CD8-positive, alpha-beta T cell (primary cell): ENCODE measurements at regions of chr10 and their contacts with region 1.

Region 1: DNA sequence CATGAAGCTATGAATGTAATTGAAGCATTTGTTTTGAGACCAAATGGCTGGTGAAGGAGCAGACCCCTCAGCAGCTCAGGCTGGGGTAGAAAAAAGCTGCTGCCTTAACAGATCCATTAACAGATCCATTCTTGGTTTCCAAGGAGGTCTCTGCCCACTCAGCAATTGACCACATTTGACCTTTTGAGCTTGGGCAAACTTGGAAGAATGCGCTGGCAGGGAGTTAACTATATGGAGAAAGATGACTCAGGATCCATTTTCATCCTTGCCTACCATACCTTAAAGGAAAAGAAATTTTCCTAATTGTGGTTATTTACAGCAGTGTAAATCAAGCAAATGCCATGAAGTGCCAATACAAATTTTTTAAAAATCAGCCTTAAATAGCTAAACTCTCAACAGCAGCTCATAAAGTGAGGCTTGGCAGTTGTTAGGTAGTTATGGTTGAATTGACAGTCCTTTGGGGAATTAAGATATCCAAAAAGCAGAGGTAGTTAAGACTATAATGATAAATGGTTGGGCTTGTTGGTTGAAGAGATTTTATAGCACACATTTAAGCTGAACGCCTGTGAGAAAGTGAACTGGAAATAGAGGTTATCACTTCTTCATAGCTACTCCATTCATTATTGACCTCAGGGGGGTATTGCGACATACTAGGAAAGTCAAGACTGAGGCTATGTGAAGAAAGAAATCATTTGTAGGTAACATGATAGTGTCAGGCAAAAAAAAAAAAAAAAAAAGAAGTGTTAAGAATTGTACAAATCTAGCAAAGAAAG is 83.9 kb downstream of the MKX start:
- DNase-seq: no peak
- ATAC-seq: no peak
- H3K4me3 ChIP-seq: no peak overlapping the region
- H3K4me3 Mint-ChIP-seq: no peak overlapping the region
- H3K27ac ChIP-seq: no peak overlapping the region
- H3K27ac Mint-ChIP-seq: no peak overlapping the region
- H3K4me1 ChIP-seq: no peaks in the 10 kb centered on the region
- H3K4me1 Mint-ChIP-seq: no peaks in the 10 kb centered on the region
- H3K27me3 ChIP-seq: peaks cover 0 to 5% of the 10 kb centered on the region in 2 experiments
- H3K27me3 Mint-ChIP-seq: peaks cover 43% of the 10 kb centered on the region
- CTCF ChIP-seq: no peak

Region 2: DNA sequence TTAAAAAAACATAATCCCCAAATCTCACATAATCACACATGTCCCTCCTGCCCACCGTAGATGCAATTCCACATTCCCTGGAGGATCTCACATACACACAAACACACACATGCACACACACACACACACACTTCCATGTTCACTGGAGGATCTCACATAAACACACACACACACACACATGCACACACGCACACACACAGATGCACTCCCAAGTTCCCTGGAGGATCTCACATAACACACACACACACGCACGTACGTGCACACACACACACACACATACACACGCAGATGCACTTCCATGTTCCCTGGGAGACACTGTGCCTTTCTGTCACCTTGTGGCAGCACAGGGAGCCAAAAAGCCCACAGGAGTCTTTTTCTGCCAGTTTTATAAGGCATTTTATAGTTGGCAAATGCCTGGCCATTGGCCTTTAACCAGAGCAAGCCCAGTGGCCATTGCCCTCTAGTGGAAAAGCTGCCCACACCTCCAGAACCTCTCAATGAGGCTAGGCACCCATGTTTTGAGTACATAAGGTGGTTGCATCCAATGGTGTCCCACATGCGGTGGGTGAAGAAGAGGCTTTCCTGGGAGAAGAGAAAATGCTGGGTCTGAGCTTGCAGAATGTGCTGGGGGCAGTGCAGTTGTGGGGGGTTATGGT is 305.7 kb before region 1 on chr10:
- CTCF ChIA-PET with region 1: no interaction called
- POLR2A ChIA-PET with region 1: no interaction called
- intact Hi-C with region 1: no loop called
- DNase-seq: no peak
- ATAC-seq: no peak
- H3K4me3 ChIP-seq: no peak overlapping the region
- H3K4me3 Mint-ChIP-seq: no peak overlapping the region
- H3K27ac ChIP-seq: no peak overlapping the region
- H3K27ac Mint-ChIP-seq: no peak overlapping the region
- H3K4me1 ChIP-seq: no peaks in the 10 kb centered on the region
- H3K4me1 Mint-ChIP-seq: no peaks in the 10 kb centered on the region
- H3K27me3 ChIP-seq: no peaks in the 10 kb centered on the region
- H3K27me3 Mint-ChIP-seq: peaks cover 8% of the 10 kb centered on the region
- CTCF ChIP-seq: no peak

Region 3: GRCh38 chr10:27369880-27370279 is 291.8 kb before region 1 on chr10:
- CTCF ChIA-PET with region 1: interaction called, 3 read pairs
- POLR2A ChIA-PET with region 1: no interaction called
- intact Hi-C with region 1: loop called in 1 of 2 experiments (anchors 1 kb)
- DNase-seq: peak in 1 of 9 experiments; percentile 10
- ATAC-seq: no peak
- H3K4me3 ChIP-seq: no peak overlapping the region
- H3K4me3 Mint-ChIP-seq: no peak overlapping the region
- H3K27ac ChIP-seq: no peak overlapping the region
- H3K27ac Mint-ChIP-seq: no peak overlapping the region
- H3K4me1 ChIP-seq: no peaks in the 10 kb centered on the region
- H3K4me1 Mint-ChIP-seq: no peaks in the 10 kb centered on the region
- H3K27me3 ChIP-seq: no peaks in the 10 kb centered on the region
- H3K27me3 Mint-ChIP-seq: peaks cover 6% of the 10 kb centered on the region
- CTCF ChIP-seq: no peak

Region 4: DNA sequence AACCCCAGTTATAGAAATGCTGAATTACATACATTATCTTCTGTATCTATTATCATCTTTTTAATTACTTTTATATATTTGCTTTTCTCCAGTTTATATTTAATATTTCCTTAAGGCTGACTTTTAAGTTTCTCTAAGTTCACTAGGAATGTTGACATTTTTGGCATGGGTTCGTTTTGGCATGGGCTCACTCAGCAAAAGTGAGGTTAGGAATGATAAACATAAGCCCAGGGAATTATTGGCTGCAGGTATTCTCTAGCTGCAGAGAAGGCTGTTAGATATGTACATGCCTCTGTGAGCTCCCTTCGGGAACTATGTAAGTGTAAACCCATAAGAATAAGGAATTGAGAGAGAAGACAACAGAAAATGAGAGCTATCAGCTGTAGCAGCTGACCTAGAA is 221.2 kb before region 1 on chr10:
- CTCF ChIA-PET with region 1: interaction called, 18 read pairs
- POLR2A ChIA-PET with region 1: no interaction called
- intact Hi-C with region 1: no loop called
- DNase-seq: no peak
- ATAC-seq: no peak
- H3K4me3 ChIP-seq: no peak overlapping the region
- H3K4me3 Mint-ChIP-seq: no peak overlapping the region
- H3K27ac ChIP-seq: no peak overlapping the region
- H3K27ac Mint-ChIP-seq: no peak overlapping the region
- H3K4me1 ChIP-seq: no peaks in the 10 kb centered on the region
- H3K4me1 Mint-ChIP-seq: no peaks in the 10 kb centered on the region
- H3K27me3 ChIP-seq: no peaks in the 10 kb centered on the region
- H3K27me3 Mint-ChIP-seq: peaks cover 3% of the 10 kb centered on the region
- CTCF ChIP-seq: no peak

Region 5: DNA sequence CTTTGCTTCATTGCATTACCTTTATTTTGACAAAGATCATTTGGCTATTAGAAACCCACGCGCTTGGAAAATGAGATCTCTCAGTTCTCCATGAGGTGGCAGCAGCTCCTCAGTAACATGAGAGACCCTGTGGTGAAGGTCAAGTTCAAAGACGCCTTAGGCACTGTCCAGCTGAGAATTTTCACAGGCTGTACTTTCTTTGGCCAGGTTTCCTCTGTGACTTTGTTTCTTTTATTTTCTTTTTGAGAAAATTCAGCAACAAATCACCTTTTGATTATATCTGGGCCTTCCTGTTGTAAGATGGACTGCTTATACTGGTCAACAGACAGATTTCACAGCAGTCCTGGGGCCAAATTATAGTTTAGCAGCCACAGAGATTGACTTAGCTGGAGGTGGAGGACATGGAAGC is 103.1 kb before region 1 on chr10:
- CTCF ChIA-PET with region 1: interaction called, 10 read pairs
- POLR2A ChIA-PET with region 1: no interaction called
- intact Hi-C with region 1: loop called (anchors 1 kb)
- DNase-seq: peak in 6 of 9 experiments; percentile 17 to 63 (median 35)
- ATAC-seq: no peak
- H3K4me3 ChIP-seq: no peak overlapping the region
- H3K4me3 Mint-ChIP-seq: no peak overlapping the region
- H3K27ac ChIP-seq: no peak overlapping the region
- H3K27ac Mint-ChIP-seq: no peak overlapping the region
- H3K4me1 ChIP-seq: no peaks in the 10 kb centered on the region
- H3K4me1 Mint-ChIP-seq: peaks cover 6% of the 10 kb centered on the region
- H3K27me3 ChIP-seq: no peaks in the 10 kb centered on the region
- H3K27me3 Mint-ChIP-seq: no peaks in the 10 kb centered on the region
- CTCF ChIP-seq: peak; percentile 61

Region 6: DNA sequence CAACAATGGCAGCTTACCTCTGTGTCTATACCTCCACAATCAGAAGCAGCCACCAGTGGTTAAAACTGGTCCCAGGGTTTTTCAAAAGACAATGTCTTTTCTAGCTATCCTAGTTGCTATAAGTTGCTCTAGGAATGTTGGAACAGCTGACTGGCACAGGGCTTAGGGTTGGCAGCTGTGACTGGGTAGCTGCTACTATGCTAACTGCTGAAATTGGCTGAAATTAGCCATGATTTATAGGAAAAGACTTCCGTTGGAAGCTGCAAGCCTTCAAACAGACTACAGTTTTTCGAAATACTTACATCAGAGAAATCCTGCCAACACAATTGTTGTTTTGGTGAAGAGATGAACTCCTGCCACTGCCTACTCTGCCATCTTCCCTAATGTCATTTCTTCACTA is 18.4 kb before region 1 on chr10:
- CTCF ChIA-PET with region 1: no interaction called
- POLR2A ChIA-PET with region 1: no interaction called
- intact Hi-C with region 1: no loop called
- DNase-seq: no peak
- ATAC-seq: no peak
- H3K4me3 ChIP-seq: no peak overlapping the region
- H3K4me3 Mint-ChIP-seq: no peak overlapping the region
- H3K27ac ChIP-seq: no peak overlapping the region
- H3K27ac Mint-ChIP-seq: no peak overlapping the region
- H3K4me1 ChIP-seq: no peaks in the 10 kb centered on the region
- H3K4me1 Mint-ChIP-seq: no peaks in the 10 kb centered on the region
- H3K27me3 ChIP-seq: no peaks in the 10 kb centered on the region
- H3K27me3 Mint-ChIP-seq: peaks cover 6% of the 10 kb centered on the region
- CTCF ChIP-seq: no peak

Region 7: DNA sequence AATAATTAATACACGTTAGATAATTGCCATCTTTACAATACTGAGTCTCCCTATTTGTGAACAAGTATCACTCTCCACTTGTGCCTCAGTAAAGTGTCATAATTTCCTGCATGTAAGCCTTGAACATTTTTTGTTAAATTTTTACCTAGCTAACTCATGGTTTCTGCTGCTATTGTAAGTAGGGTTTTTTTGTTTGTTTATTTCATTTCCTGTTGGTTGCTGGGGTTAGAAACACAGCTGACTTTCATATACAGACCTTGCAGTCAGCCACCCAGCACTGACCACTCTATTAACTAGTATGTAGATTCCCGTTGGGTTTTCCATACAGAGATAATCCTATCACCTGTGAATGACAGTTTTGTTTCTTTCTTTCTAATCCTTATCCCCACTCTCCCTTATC is 507.8 kb after region 1 on chr10:
- CTCF ChIA-PET with region 1: no interaction called
- POLR2A ChIA-PET with region 1: no interaction called
- intact Hi-C with region 1: no loop called
- DNase-seq: peak in 1 of 9 experiments; percentile 16
- ATAC-seq: no peak
- H3K4me3 ChIP-seq: no peak overlapping the region
- H3K4me3 Mint-ChIP-seq: no peak overlapping the region
- H3K27ac ChIP-seq: no peak overlapping the region
- H3K27ac Mint-ChIP-seq: no peak overlapping the region
- H3K4me1 ChIP-seq: no peaks in the 10 kb centered on the region
- H3K4me1 Mint-ChIP-seq: peaks cover 33% of the 10 kb centered on the region
- H3K27me3 ChIP-seq: no peaks in the 10 kb centered on the region
- H3K27me3 Mint-ChIP-seq: no peaks in the 10 kb centered on the region
- CTCF ChIP-seq: no peak